ENCODE measurements at regions of chr17 and their contacts with region 1.

Region 1: DNA sequence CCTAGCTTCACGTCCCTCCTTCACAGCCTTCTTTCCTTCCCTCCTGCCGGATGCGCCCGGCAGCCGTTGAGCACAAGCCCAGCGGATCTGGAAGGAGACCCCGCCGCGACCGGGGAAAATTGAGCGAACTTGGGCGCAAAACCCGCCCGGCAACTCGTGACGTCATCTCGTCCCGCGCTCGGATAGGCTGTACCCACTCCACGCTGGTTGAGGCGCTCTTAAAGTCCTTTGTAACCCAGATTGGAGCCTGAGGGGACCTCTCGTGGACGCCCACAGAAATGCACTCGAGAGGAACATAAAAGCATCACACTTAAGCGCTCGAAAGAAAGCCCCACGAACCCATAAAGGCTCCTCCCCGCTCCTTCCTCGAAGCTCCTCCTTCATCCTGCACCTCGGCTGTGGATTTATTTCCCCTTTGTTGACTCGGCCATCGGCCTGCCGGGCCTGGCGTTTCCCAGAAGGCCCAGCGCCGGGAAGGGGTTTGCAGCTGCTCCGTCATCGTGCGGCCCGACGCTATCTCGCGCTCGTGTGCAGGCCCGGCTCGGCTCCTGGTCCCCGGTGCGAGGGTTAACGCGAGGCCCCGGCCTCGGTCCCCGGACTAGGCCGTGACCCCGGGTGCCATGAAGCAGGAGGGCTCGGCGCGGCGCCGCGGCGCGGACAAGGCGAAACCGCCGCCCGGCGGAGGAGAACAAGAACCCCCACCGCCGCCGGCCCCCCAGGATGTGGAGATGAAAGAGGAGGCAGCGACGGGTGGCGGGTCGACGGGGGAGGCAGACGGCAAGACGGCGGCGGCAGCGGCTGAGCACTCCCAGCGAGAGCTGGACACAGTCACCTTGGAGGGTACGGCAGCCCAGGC is at the start of gene PSMD3:
- DNase-seq: peak; percentile 99
- H3K4me3 Mint-ChIP-seq: peak within 1 kb of the TSS; percentile 94
- H3K27ac Mint-ChIP-seq: peak within 1 kb of the TSS; percentile 91
- H3K4me1 Mint-ChIP-seq: peaks cover 37% of the 10 kb centered on the region
- H3K27me3 Mint-ChIP-seq: peaks cover 10% of the 10 kb centered on the region
- total RNA-seq, gene PSMD3: 88.4 to 94.9 TPM

Region 2: DNA sequence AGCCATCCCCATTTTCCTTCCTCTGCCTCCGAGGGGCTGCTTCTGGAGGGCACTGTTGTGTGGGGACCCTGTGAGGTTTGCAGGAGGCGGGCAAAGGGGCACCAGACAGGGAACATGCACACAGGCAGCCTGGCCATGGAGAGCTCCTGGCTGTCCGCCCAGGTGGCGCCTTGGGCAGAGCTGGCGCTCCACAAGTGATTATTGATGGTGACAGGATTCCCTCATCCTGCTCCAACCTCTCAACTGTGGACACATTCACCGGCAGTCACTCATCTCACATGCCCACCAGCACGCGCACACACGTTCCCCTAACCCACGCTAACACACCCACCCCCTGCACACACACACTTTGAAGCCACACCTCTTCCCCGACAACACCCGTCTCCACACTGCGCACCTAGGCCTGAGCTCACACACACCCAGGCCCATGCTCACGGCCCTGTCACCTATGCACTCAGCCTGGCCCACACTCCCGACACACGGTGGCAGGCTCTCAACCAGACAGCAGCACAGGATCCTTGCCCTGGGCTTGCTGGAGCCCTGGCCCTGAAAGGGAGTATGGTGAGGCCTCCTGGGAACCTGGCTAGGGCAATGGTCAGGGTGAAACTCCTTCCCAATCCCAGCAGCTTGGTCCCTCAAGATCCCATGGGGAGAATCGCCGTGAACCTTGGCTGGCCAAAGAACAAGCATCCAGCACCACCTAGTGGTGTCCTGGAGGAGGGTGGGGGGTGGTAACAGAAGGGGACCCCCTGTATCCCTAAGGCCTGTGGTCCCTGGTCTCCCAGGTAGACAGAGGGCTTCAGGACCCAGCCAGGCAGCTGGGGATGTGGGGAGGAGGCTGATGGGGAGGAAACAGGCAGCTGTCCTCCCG is 308.7 kb before region 1 on chr17:
- CTCF ChIA-PET with region 1: no interaction called
- POLR2A ChIA-PET with region 1: no interaction called
- DNase-seq: no peak
- H3K4me3 Mint-ChIP-seq: no peak overlapping the region
- H3K27ac Mint-ChIP-seq: peak overlapping the region; percentile 39
- H3K4me1 Mint-ChIP-seq: peaks cover 23% of the 10 kb centered on the region
- H3K27me3 Mint-ChIP-seq: peaks cover 18% of the 10 kb centered on the region

Region 3: GRCh38 chr17:39887078-39887477 is 93.5 kb before region 1 on chr17:
- CTCF ChIA-PET with region 1: no interaction called
- POLR2A ChIA-PET with region 1: no interaction called
- DNase-seq: no peak
- H3K4me3 Mint-ChIP-seq: no peak overlapping the region
- H3K27ac Mint-ChIP-seq: no peak overlapping the region
- H3K4me1 Mint-ChIP-seq: peaks cover 3% of the 10 kb centered on the region
- H3K27me3 Mint-ChIP-seq: peaks cover 30% of the 10 kb centered on the region

Region 4: GRCh38 chr17:39963829-39964228 is 16.8 kb before region 1 on chr17:
- CTCF ChIA-PET with region 1: interaction called, 35 read pairs
- POLR2A ChIA-PET with region 1: interaction called, 3 read pairs
- DNase-seq: peak; percentile 23
- H3K4me3 Mint-ChIP-seq: no peak overlapping the region
- H3K27ac Mint-ChIP-seq: peak overlapping the region; percentile 27
- H3K4me1 Mint-ChIP-seq: peaks cover 23% of the 10 kb centered on the region
- H3K27me3 Mint-ChIP-seq: peaks cover 6% of the 10 kb centered on the region

Region 5: GRCh38 chr17:39969375-39969774 is 11.2 kb before region 1 on chr17:
- CTCF ChIA-PET with region 1: interaction called, 28 read pairs
- POLR2A ChIA-PET with region 1: no interaction called
- DNase-seq: no peak
- H3K4me3 Mint-ChIP-seq: no peak overlapping the region
- H3K27ac Mint-ChIP-seq: no peak overlapping the region
- H3K4me1 Mint-ChIP-seq: no peaks in the 10 kb centered on the region
- H3K27me3 Mint-ChIP-seq: peaks cover 29% of the 10 kb centered on the region

Region 6: DNA sequence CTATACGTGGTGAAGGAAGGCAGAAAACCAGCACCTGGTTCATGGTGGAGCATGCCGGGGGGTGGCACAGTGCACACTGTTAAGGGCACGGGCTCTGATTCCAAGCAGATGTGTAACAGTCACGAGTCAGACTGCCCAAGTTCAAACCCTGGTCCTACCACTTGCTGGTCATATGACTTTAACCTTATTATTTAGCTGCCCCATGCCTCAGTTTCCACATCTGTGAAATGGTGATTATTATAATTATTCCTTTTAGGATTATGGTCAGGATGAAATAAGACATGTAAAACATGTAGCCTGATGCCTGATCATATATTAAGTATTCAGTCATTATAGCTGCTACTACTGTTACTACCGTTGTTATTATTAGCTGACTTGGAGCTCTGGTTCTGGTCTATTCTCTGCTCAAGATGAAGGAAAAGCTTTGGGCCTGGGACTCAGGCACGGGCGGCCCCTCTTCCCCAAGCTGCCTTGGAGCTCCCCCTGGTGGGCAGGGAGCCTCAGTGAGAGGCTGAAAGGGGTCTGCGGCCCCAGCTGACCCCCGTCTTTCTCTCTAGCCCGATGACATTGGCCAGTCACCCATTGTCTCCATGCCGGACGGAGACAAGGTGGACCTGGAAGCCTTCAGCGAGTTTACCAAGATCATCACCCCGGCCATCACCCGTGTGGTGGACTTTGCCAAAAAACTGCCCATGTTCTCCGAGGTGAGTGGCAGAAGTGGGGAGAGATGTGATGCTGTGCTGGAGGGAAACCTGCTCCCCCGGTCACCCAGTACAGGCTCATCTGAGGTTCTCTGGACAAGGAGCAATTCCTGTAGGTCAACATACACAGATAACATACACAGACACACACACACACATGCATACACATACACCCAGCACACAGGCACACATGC is 105.8 kb after region 1 on chr17:
- CTCF ChIA-PET with region 1: no interaction called
- POLR2A ChIA-PET with region 1: no interaction called
- DNase-seq: peak; percentile 58
- H3K4me3 Mint-ChIP-seq: no peak overlapping the region
- H3K27ac Mint-ChIP-seq: no peak overlapping the region
- H3K4me1 Mint-ChIP-seq: peaks cover 8% of the 10 kb centered on the region
- H3K27me3 Mint-ChIP-seq: no peaks in the 10 kb centered on the region